KBM-7 (cell line): ENCODE measurements at regions of chr16 and their contacts with region 1.

Region 1: GRCh38 chr16:72124761-72125634 is 31.4 kb downstream of the DHX38 start:
- DNase-seq: peak; percentile 64

Region 2: GRCh38 chr16:72467157-72467759 is 342.3 kb after region 1 on chr16:
- in situ Hi-C with region 1: loop called (anchors 25 kb)
- DNase-seq: peak; percentile 46

Region 3: DNA sequence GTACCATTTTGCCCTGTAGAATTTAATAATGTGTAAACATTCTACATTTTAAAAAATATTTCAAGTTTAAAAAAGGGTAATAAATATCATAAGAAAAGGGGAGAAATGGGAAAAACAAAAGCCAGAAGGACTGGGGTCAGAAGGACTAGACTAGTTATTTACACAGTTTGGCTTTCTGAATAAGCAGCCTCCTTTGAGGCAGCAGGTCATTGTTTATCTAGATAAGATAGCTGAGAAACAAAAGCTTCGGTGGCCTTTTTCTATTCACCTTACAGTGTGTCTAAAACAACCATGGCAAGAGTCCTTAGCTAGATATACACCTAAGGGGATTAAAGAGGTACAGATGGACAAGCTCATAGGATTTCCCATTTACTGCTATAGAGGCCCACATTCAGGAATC is 443.5 kb after region 1 on chr16:
- in situ Hi-C with region 1: no loop called
- DNase-seq: no peak